ENCODE measurements at regions of chr5 and their contacts with region 1.

Region 1: DNA sequence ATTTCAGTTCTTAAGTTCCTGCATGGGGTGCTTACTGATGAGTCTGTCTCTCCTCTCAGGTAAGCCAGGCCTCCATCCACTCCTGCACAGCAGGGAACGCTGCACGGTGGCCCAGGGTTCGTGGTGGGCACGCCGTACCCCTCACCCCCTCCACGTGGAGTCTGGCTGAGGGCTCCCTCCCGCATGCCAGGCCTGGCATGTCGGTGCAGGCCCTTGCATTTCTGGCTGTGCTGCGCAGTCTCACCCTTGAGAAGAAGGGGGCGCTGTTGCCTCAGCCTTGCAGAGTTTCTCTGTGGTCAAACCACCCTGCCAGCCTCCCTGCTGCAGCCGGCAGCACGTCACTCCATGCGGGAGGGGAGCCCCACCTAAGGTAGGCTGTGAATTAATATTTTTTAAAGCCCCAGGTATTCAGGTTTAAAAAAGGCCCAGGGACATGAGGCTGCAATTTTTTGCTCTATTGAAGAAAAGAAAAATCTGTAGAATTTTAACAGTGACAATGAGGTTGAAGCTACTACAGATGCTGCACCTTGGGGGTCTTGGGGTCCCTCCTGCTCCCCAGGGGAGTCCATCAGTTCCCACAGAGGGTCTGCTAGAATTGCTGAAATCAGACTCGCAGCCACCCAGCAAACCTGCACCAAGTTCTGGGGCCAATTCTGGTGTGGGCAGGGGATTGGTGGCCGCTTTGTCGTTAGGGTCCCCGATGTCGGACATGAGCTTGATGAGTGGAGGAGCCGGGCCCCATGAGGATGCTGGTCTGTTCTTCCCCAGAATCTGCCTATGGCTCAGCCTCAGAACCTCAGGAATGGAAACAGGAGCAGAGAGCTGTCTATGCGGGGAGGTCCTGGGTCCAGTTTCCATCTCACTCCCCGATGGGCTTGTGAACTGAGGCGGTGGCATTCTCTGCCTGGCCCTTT is 52.6 kb downstream of the TENT4A start:
- DNase-seq: peak; percentile 59 to 79
- H3K4me3 ChIP-seq: no peak overlapping the region
- H3K27ac ChIP-seq: peak overlapping the region in 2 of 3 donors; percentile 17 to 39
- H3K4me1 ChIP-seq: peaks cover 0 to 16% of the 10 kb centered on the region in 2 donors
- H3K27me3 ChIP-seq: no peaks in the 10 kb centered on the region
- CTCF ChIP-seq: peak; percentile 38 to 81 (median 66)
- POLR2A ChIP-seq: no peak

Region 2: GRCh38 chr5:6632917-6633468 is 132.9 kb before region 1 on chr5 and contains the starts of genes NSUN2 and SRD5A1:
- intact Hi-C with region 1: no loop called
- DNase-seq: peak; percentile 88 to 89
- H3K4me3 ChIP-seq: peak within 1 kb of the TSS; percentile 70 to 94 (median 78)
- H3K27ac ChIP-seq: peak within 1 kb of the TSS; percentile 91 to 96 (median 96)
- H3K4me1 ChIP-seq: peaks cover 7 to 12% of the 10 kb centered on the region in 2 donors
- H3K27me3 ChIP-seq: no peaks in the 10 kb centered on the region
- CTCF ChIP-seq: no peak
- POLR2A ChIP-seq: peak in 1 of 2 donors; percentile 51
- total RNA-seq, gene NSUN2: 34.1 to 49.6 (median 41.9) TPM
- total RNA-seq, gene SRD5A1: 3.0 to 7.5 (median 5.0) TPM

Region 3: GRCh38 chr5:7745882-7746610 is 980.2 kb after region 1 on chr5:
- intact Hi-C with region 1: loop called (anchors 10 kb)
- DNase-seq: peak; percentile 59 to 73
- H3K4me3 ChIP-seq: no peak overlapping the region
- H3K27ac ChIP-seq: no peak overlapping the region
- H3K4me1 ChIP-seq: no peaks in the 10 kb centered on the region
- H3K27me3 ChIP-seq: no peaks in the 10 kb centered on the region
- CTCF ChIP-seq: peak; percentile 56 to 85 (median 66)
- POLR2A ChIP-seq: no peak